Breast epithelium (tissue), 4 donors: ENCODE measurements at regions of chr10 and their contacts with region 1.

Region 1: DNA sequence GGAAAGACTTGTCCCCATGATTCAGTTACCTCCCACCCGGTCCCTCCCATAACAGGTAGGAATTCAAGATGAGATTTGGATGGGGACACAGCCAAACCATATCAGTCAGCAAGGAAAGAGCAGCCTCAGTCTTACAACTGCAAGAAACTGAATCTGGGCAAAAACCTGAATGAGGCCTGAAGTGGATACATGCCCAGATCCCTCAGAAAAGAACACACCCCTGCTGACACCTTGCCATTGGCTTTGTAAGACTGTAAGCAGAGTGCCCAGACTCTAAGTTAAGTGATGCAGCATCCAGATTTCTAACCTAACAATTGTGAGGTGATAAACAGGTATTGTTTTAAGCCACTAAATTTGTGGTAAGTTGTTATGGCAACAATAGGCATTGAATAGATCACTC is 670.8 kb downstream of the SORCS1 start:
- DNase-seq: no peak
- H3K4me3 ChIP-seq: no peak overlapping the region
- H3K27ac ChIP-seq: no peak overlapping the region
- H3K4me1 ChIP-seq: no peaks in the 10 kb centered on the region
- H3K27me3 ChIP-seq: no peaks in the 10 kb centered on the region
- CTCF ChIP-seq: no peak
- POLR2A ChIP-seq: no peak

Region 2: GRCh38 chr10:106338486-106338885 is 155.3 kb before region 1 on chr10:
- intact Hi-C with region 1: no loop called
- DNase-seq: no peak
- H3K4me3 ChIP-seq: no peak overlapping the region
- H3K27ac ChIP-seq: no peak overlapping the region
- H3K4me1 ChIP-seq: no peaks in the 10 kb centered on the region
- H3K27me3 ChIP-seq: no peaks in the 10 kb centered on the region
- CTCF ChIP-seq: no peak
- POLR2A ChIP-seq: no peak

Region 3: GRCh38 chr10:106513352-106513771 is 19.6 kb after region 1 on chr10:
- intact Hi-C with region 1: no loop called
- DNase-seq: no peak
- H3K4me3 ChIP-seq: no peak overlapping the region
- H3K27ac ChIP-seq: no peak overlapping the region
- H3K4me1 ChIP-seq: no peaks in the 10 kb centered on the region
- H3K27me3 ChIP-seq: no peaks in the 10 kb centered on the region
- CTCF ChIP-seq: no peak
- POLR2A ChIP-seq: no peak

Region 4: DNA sequence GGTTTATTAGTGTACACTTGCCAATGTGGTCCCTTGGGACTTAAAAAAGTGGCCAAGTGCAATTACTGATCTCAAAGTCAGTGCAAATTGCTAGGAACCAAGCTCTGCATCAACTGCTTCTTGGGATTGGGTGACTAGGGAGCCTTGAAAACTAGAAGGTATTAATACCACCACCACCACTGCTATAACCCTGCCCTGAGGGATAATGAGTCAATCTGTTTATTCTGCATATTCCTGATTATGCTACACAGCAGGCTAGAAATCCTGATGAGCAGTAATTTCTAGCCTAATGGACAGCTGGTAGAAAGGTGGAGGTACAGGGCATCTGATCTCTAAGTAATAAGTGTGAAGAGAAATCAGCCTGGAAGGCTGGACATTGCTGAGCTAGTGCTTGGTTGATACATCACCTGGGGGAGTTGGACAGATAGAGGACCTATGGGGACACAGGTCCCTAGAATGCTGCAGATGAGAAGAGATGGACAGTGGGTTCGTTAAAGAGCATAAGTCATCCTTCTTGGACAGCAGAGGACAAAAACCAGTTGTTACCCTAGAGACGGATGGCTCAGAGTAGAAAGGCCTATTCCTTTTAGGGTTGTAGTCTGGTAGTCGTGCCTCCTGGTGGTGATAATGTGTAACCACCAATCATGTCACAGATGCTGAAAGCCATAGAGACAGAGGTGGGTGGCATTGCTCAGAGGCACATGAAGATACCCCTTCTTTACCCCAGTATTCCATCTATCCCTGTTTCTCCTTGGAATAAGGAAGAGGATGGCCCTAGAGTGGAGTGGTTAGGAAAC is 115.9 kb after region 1 on chr10:
- intact Hi-C with region 1: no loop called
- DNase-seq: no peak
- H3K4me3 ChIP-seq: no peak overlapping the region
- H3K27ac ChIP-seq: no peak overlapping the region
- H3K4me1 ChIP-seq: no peaks in the 10 kb centered on the region
- H3K27me3 ChIP-seq: no peaks in the 10 kb centered on the region
- CTCF ChIP-seq: no peak
- POLR2A ChIP-seq: no peak

Region 5: GRCh38 chr10:107280293-107280692 is 786.5 kb after region 1 on chr10:
- intact Hi-C with region 1: loop called (anchors 5 kb)
- DNase-seq: no peak
- H3K4me3 ChIP-seq: no peak overlapping the region
- H3K27ac ChIP-seq: no peak overlapping the region
- H3K4me1 ChIP-seq: no peaks in the 10 kb centered on the region
- H3K27me3 ChIP-seq: no peaks in the 10 kb centered on the region
- CTCF ChIP-seq: no peak
- POLR2A ChIP-seq: no peak

Region 6: DNA sequence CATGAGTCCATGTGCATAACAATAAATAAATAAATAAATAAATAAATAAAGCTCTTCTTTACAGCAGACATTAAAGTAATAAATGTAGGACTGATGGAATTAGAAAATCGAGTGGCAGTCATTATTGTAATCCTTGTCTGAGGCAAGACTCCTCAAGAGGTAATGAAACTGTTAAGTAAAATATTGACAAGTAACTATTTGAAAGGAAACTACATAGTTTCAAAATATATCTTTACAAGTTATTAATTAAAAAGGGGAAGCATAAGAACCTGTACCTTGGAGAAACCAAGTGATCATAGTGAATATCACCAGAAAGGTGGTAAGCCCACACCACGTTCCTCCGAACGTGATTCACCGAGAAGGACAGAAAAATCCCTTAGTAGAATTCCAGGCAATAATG is 956.3 kb after region 1 on chr10:
- intact Hi-C with region 1: no loop called
- DNase-seq: no peak
- H3K4me3 ChIP-seq: no peak overlapping the region
- H3K27ac ChIP-seq: no peak overlapping the region
- H3K4me1 ChIP-seq: no peaks in the 10 kb centered on the region
- H3K27me3 ChIP-seq: no peaks in the 10 kb centered on the region
- CTCF ChIP-seq: no peak
- POLR2A ChIP-seq: no peak